PC-9 (cell line): ENCODE measurements at regions of chr2 and their contacts with region 1.

Region 1: GRCh38 chr2:234674781-234675201 is 177.9 kb upstream of the ARL4C start:
- DNase-seq: peak; percentile 52 to 75
- H3K4me3 ChIP-seq: no peak overlapping the region
- H3K27ac ChIP-seq: peak overlapping the region; percentile 54
- H3K4me1 ChIP-seq: peaks cover 72% of the 10 kb centered on the region
- H3K27me3 ChIP-seq: no peaks in the 10 kb centered on the region
- CTCF ChIP-seq: no peak

Region 2: GRCh38 chr2:234363011-234363487 is 311.7 kb before region 1 on chr2:
- CTCF ChIA-PET with region 1: no interaction called
- POLR2A ChIA-PET with region 1: interaction called, 10 read pairs
- intact Hi-C with region 1: no loop called
- DNase-seq: peak; percentile 73 to 99
- H3K4me3 ChIP-seq: peak overlapping the region; percentile 32; the same call in 1 of the 2 replicates
- H3K27ac ChIP-seq: peak overlapping the region; percentile 86
- H3K4me1 ChIP-seq: peaks cover 78% of the 10 kb centered on the region
- H3K27me3 ChIP-seq: no peaks in the 10 kb centered on the region
- CTCF ChIP-seq: no peak

Region 3: DNA sequence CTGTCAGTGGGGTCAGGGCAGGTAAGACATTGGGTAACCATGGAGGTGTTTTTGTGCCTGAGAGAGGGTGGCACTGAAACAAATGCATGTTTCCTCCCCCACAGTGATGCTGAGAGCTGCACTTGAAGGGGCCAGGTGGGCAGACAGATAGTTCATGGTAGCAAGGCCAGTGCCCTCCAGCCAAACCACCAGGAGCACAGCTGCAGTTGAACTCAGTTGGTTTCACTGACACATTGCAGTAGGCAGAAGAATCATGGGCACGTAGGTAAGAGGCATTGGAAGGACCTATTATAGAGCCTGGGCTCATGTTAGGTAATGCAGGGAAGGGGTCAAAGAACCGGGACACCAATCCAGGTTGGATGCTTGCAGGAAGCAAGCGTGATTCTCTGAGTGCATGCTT is 84.7 kb before region 1 on chr2:
- CTCF ChIA-PET with region 1: no interaction called
- POLR2A ChIA-PET with region 1: interaction called, 10 read pairs
- intact Hi-C with region 1: no loop called
- DNase-seq: no peak
- H3K4me3 ChIP-seq: no peak overlapping the region
- H3K27ac ChIP-seq: no peak overlapping the region
- H3K4me1 ChIP-seq: no peaks in the 10 kb centered on the region
- H3K27me3 ChIP-seq: no peaks in the 10 kb centered on the region
- CTCF ChIP-seq: no peak

Region 4: GRCh38 chr2:234733795-234734600 is 59.2 kb after region 1 on chr2:
- CTCF ChIA-PET with region 1: no interaction called
- POLR2A ChIA-PET with region 1: no interaction called
- intact Hi-C with region 1: no loop called
- DNase-seq: no peak
- H3K4me3 ChIP-seq: no peak overlapping the region
- H3K27ac ChIP-seq: no peak overlapping the region
- H3K4me1 ChIP-seq: no peaks in the 10 kb centered on the region
- H3K27me3 ChIP-seq: no peaks in the 10 kb centered on the region
- CTCF ChIP-seq: no peak